Transverse colon (tissue), 4 donors: ENCODE measurements at regions of chr17 and their contacts with region 1.

Region 1: GRCh38 chr17:48543107-48543853 is 1.6 kb downstream of the HOXB2 start:
- DNase-seq: peak; percentile 57
- H3K4me3 ChIP-seq: peak overlapping the region; percentile 45 to 74 (median 60)
- H3K27ac ChIP-seq: peak overlapping the region; percentile 89 to 95 (median 94)
- H3K4me1 ChIP-seq: peaks cover 18 to 56% (median 30%) of the 10 kb centered on the region in 4 donors
- H3K27me3 ChIP-seq: peaks cover 17% of the 10 kb centered on the region
- CTCF ChIP-seq: peak in 4 of 5 experiments; percentile 3 to 51 (median 28)
- EP300 ChIP-seq: no peak
- POLR2A ChIP-seq: no peak

Region 2: GRCh38 chr17:48441231-48441711 is 102.0 kb before region 1 on chr17:
- in situ Hi-C with region 1: no loop called
- intact Hi-C with region 1: no loop called
- DNase-seq: no peak
- H3K4me3 ChIP-seq: no peak overlapping the region
- H3K27ac ChIP-seq: peak overlapping the region in 3 of 4 donors; percentile 22 to 43 (median 40)
- H3K4me1 ChIP-seq: peaks cover 0 to 5% (median 0%) of the 10 kb centered on the region in 4 donors
- H3K27me3 ChIP-seq: no peaks in the 10 kb centered on the region
- CTCF ChIP-seq: no peak
- EP300 ChIP-seq: no peak
- POLR2A ChIP-seq: no peak

Region 3: GRCh38 chr17:48492401-48493298 is 50.6 kb before region 1 on chr17:
- in situ Hi-C with region 1: no loop called
- intact Hi-C with region 1: loop called (anchors 5 kb)
- DNase-seq: peak; percentile 80
- H3K4me3 ChIP-seq: peak overlapping the region in 3 of 4 donors; percentile 10 to 37 (median 14)
- H3K27ac ChIP-seq: peak overlapping the region; percentile 17 to 32 (median 26)
- H3K4me1 ChIP-seq: peaks cover 9 to 26% (median 13%) of the 10 kb centered on the region in 4 donors
- H3K27me3 ChIP-seq: peaks cover 6% of the 10 kb centered on the region
- CTCF ChIP-seq: peak; percentile 85 to 90 (median 88)
- EP300 ChIP-seq: no peak
- POLR2A ChIP-seq: no peak

Region 4: DNA sequence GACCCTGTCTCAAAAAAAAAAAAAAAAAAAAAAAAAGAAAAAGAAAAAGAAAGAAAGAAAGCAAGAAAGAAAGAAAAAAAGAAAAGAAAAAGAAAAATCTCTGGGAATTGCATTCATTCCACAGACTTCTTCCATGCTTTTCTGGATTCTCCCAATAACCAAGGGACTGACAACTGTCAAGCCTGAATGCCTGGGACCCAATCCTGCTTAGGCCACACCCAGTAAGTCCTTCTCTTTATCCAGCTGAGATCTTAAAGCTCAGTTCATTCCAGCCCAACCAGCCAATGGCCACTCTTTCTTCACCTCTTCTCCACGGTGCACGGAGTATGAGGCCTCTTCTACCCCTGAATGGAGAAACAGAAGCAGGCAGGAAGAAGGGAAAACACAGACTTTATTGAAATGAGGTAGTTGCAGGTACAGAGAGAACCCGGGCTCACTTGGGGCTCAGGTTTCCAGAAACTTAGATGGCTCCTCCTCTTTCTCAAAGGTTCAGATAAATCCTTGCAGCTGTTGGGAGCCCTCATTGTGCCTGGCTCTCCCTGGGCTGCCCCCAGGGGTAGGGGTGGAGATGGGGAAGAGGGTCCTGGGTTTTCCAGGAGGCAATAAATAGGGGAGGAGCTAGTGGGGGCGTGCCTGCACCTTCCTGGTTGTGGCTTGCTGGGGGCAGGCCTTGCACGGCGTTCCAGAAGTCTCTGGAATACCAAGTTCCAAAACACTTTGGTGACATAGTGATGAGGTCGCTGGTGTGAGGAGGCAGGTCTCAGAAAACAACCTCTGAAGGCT is 14.9 kb before region 1 on chr17:
- in situ Hi-C with region 1: no loop called
- intact Hi-C with region 1: loop called (anchors 1 kb)
- DNase-seq: no peak
- H3K4me3 ChIP-seq: no peak overlapping the region
- H3K27ac ChIP-seq: no peak overlapping the region
- H3K4me1 ChIP-seq: peaks cover 0 to 9% (median 0%) of the 10 kb centered on the region in 4 donors
- H3K27me3 ChIP-seq: peaks cover 38% of the 10 kb centered on the region
- CTCF ChIP-seq: no peak
- EP300 ChIP-seq: no peak
- POLR2A ChIP-seq: no peak

Region 5: DNA sequence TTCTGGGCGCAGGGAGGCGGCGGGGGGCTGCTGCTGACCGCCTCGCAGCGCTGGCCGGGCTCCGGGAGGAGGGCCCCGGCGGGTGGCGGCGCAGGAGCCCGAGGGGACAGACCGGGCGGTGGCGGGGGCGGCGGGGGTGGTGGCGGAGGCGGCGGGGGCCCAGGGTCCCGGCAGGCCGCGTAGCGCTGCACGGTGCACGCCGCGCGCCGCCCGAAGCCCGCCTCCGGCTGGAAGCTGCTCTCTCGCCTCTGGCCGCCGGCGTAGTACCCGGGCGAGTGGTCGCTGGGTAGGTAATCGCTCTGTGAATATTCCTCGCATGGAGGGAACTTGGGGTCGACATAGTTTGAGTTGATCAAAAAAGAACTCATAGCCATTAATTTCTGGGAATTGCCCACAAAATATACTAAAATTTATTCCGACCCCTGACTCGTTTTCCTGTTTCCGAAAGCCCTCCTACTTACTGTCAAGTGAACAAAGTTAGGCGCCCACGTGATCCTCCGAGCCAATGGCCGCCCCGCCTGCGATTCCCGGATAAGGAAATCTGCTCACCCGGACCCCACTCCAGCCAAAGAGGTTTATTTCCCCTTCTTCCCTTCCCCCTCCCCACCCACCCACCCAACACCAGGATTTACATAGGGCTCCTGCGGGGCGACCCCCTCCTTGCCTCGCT is 34.8 kb after region 1 on chr17 and contains the start of gene HOXB4:
- in situ Hi-C with region 1: no loop called
- intact Hi-C with region 1: loop called (anchors 5 kb)
- DNase-seq: peak; percentile 80
- H3K4me3 ChIP-seq: peak within 1 kb of the TSS; percentile 38 to 54 (median 46)
- H3K27ac ChIP-seq: peak within 1 kb of the TSS; percentile 89 to 95 (median 92)
- H3K4me1 ChIP-seq: peaks cover 18 to 84% (median 69%) of the 10 kb centered on the region in 4 donors
- H3K27me3 ChIP-seq: peaks cover 7% of the 10 kb centered on the region
- CTCF ChIP-seq: no peak
- EP300 ChIP-seq: no peak
- POLR2A ChIP-seq: no peak
- total RNA-seq, gene HOXB4: 1.9 to 4.8 (median 2.0) TPM in 3 of 4 donors, not detected in the other

Region 6: GRCh38 chr17:48646183-48647102 is 103.2 kb after region 1 on chr17:
- in situ Hi-C with region 1: no loop called
- intact Hi-C with region 1: no loop called
- DNase-seq: peak; percentile 82
- H3K4me3 ChIP-seq: peak overlapping the region; percentile 33 to 60 (median 58)
- H3K27ac ChIP-seq: peak overlapping the region; percentile 86 to 93 (median 90)
- H3K4me1 ChIP-seq: peaks cover 2 to 17% (median 13%) of the 10 kb centered on the region in 4 donors
- H3K27me3 ChIP-seq: peaks cover 76% of the 10 kb centered on the region
- CTCF ChIP-seq: no peak
- EP300 ChIP-seq: no peak
- POLR2A ChIP-seq: peak; percentile 84